Activated CD4-positive, alpha-beta T cell treated with anti-CD3 and anti-CD28 coated beads, Interleukin-2, amount 10 ng/mL, durations not matched to agents 24 days and 14 days (primary cell): ENCODE measurements at regions of chr10 and their contacts with region 1.

Region 1: DNA sequence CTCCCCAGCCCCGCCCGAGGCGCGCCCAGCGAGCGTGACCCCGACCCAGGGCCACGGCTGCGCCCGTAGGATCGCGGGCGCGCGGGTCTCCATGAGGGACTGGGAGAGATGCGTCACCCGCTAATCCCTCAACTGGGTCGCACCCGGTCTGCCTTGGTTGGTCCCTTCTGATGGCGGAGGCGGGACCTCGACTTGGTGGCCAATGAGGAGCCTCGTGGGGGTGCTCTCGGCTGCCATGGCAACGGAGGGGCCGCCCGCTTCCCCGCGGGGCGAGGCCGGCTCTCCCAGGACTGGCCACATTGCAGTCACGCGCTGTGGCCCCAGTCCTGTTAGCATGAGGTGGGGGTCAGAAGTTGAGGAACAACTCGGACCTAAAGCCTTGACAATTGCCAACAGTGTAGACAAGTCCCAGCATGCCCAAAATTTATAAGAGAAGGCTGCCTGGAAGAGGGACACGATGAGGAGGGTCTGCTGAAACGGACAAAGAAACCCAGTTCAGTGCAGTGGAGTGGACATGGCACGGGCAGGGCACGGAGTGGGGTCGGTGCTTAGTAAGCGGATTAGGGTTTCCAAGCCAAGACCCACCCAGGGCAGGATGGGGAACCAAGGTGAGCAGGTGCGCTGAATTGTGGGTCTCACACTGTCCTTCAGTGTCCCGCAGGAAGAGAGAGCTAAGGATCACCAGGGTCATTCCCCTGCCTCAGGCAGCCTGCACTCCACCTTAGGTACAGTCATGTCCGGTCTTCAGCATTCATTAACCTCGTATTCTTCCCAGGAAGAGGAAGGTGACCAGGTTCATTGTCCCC is 24.4 kb downstream of the DDIT4 start:
- DNase-seq: peak; percentile 98
- H3K4me3 Mint-ChIP-seq: peak overlapping the region; percentile 88
- H3K27ac Mint-ChIP-seq: peak overlapping the region; percentile 100
- H3K4me1 Mint-ChIP-seq: peaks cover 53% of the 10 kb centered on the region
- H3K27me3 Mint-ChIP-seq: peaks cover 2% of the 10 kb centered on the region

Region 2: GRCh38 chr10:71933651-71934050 is 364.5 kb before region 1 on chr10:
- intact Hi-C with region 1: loop called (anchors 5 kb)
- DNase-seq: peak; percentile 84
- H3K4me3 Mint-ChIP-seq: peak overlapping the region; percentile 54
- H3K27ac Mint-ChIP-seq: peak overlapping the region; percentile 79
- H3K4me1 Mint-ChIP-seq: peaks cover 17% of the 10 kb centered on the region
- H3K27me3 Mint-ChIP-seq: peaks cover 8% of the 10 kb centered on the region

Region 3: GRCh38 chr10:72248468-72249151 is 49.6 kb before region 1 on chr10:
- intact Hi-C with region 1: loop called (anchors 2 kb)
- DNase-seq: peak; percentile 94
- H3K4me3 Mint-ChIP-seq: peak overlapping the region; percentile 82
- H3K27ac Mint-ChIP-seq: peak overlapping the region; percentile 96
- H3K4me1 Mint-ChIP-seq: peaks cover 65% of the 10 kb centered on the region
- H3K27me3 Mint-ChIP-seq: no peaks in the 10 kb centered on the region

Region 4: GRCh38 chr10:72273410-72274212 is 24.6 kb before region 1 on chr10 and contains the start of gene DDIT4:
- intact Hi-C with region 1: loop called (anchors 1 kb)
- DNase-seq: peak; percentile 100
- H3K4me3 Mint-ChIP-seq: peak within 1 kb of the TSS; percentile 96
- H3K27ac Mint-ChIP-seq: peak within 1 kb of the TSS; percentile 92
- H3K4me1 Mint-ChIP-seq: peaks cover 51% of the 10 kb centered on the region
- H3K27me3 Mint-ChIP-seq: no peaks in the 10 kb centered on the region
- total RNA-seq, gene DDIT4: 260 and 271 TPM in 2 replicates

Region 5: DNA sequence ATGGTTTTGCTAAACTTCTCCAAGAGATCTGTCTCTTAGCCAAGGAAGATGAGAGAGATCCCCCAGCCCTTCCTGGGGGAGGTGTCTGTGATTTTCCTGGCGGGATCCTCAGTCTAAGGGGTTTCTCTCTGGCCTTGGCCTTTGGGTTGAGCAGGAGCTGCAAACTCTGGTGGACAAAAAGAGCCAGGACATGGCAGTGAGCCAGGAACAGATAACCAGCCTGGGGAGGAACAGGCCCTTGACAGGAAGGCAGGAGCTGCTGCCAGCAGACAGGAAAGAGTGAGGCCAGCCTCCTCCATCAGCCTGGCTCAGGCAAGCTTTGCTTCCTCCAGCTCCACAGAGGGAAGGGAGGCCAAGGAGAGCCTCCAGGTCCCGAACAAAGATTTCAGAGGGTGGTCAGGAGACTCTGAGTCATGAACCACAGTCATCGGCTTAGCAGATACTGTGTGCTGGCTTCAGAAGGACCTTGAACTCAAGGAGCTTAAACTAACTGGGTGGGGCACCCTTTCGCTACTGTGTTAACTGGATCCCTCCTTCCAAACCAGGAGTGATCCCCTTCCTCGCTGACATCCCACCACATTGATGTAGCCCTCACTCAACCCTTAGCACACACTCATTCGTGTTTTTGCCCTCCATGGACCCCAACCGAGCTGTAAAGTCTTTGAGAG is 10.3 kb after region 1 on chr10:
- intact Hi-C with region 1: loop called (anchors 1 kb)
- DNase-seq: peak; percentile 76
- H3K4me3 Mint-ChIP-seq: no peak overlapping the region
- H3K27ac Mint-ChIP-seq: peak overlapping the region; percentile 87
- H3K4me1 Mint-ChIP-seq: peaks cover 55% of the 10 kb centered on the region
- H3K27me3 Mint-ChIP-seq: no peaks in the 10 kb centered on the region

Region 6: GRCh38 chr10:72331601-72332422 is 33.6 kb after region 1 on chr10:
- intact Hi-C with region 1: loop called (anchors 1 kb)
- DNase-seq: peak; percentile 93
- H3K4me3 Mint-ChIP-seq: peak overlapping the region; percentile 88
- H3K27ac Mint-ChIP-seq: peak overlapping the region; percentile 99
- H3K4me1 Mint-ChIP-seq: peaks cover 81% of the 10 kb centered on the region
- H3K27me3 Mint-ChIP-seq: no peaks in the 10 kb centered on the region

Region 7: DNA sequence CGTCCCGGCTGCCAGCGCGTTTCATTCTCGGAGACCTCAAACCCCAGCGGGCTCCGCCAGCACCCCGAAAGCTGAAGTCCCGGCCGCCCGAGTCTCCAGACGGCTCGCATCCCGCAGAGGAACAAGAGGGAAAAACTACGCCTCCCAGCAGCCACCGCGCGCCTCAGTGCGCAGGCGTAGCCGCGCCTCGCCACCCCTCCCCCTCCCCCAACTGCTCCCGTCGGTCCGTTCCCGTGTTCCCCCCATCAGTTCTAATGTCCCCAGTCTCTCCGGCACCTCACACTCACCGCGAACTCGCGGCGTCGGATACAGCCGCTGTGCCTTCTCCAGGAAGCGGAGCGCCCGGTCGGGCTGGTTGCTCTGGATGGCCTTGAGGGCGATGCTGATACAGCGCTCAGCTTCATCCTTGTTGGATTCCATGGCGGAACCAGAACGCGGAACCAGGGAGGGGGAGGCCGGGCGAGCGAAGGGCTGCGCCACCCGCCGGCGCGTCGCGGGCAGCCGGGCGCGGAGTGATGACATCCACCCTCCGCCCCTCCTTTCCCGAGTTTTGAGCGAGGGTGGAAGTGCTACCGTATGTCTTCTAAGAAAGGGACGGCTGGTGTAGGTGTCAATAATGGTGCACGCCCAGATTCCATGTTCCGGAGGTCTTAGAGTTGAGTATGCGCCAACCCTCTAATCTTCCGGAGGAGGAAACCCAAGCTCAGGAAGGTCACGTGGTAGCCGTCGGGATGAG is 56.5 kb after region 1 on chr10 and contains the start of gene DNAJB12:
- intact Hi-C with region 1: no loop called
- DNase-seq: peak; percentile 97
- H3K4me3 Mint-ChIP-seq: peak within 1 kb of the TSS; percentile 90
- H3K27ac Mint-ChIP-seq: peak within 1 kb of the TSS; percentile 99
- H3K4me1 Mint-ChIP-seq: peaks cover 26% of the 10 kb centered on the region
- H3K27me3 Mint-ChIP-seq: no peaks in the 10 kb centered on the region
- total RNA-seq, gene DNAJB12: 32.5 and 35.1 TPM in 2 replicates

Region 8: GRCh38 chr10:72449915-72450441 is 151.8 kb after region 1 on chr10:
- intact Hi-C with region 1: no loop called
- DNase-seq: no peak
- H3K4me3 Mint-ChIP-seq: no peak overlapping the region
- H3K27ac Mint-ChIP-seq: no peak overlapping the region
- H3K4me1 Mint-ChIP-seq: no peaks in the 10 kb centered on the region
- H3K27me3 Mint-ChIP-seq: no peaks in the 10 kb centered on the region